ENCODE measurements at regions of chr1 and their contacts with region 1.

Region 1: DNA sequence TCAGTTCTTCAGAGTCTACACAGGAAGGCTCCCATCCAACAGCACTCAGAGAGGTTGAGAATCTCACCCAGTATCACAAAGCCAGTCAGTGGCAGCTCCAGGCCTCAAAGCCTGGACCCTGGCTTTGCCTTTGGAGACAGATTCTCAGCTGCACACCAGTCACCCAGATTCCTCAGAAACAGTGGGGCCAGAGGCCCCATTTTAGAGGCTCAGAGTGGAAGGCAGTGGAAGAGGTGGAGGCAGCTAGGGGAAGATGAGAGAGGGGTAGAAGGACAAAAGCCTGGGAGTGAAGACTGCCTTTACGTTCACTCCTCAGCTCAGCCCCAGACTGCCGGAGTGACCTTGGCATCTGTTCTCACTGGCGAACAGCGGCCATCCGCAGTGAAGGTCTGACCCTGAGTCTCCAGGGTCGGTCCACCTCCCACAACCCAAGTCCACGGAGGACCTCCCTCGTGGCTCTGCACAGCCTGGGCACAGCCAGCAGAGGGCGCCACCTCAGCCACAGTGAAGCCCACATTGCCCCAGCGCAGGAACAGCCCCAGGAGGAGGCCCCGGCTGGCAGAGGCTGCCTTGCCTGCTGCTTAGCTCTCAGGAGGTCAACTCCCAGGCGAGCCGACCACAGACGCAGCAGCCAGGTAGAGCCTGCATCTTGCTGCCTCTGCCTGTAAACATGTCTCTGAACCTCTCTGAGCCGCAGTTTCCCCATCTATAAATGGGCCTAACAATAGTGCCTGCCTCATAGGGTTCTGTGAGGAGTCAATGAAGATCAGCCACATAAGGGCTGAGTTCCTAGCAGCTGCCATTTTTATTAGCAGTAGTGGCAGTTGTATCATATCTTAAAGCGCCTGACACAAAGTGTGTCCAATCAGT is 5.9 kb upstream of the FNDC5 start:
- DNase-seq: no peak
- H3K4me3 ChIP-seq: no peak overlapping the region
- H3K27ac ChIP-seq: no peak overlapping the region
- H3K4me1 ChIP-seq: peaks cover 22 to 42% (median 33%) of the 10 kb centered on the region in 4 donors
- H3K27me3 ChIP-seq: no peaks in the 10 kb centered on the region
- CTCF ChIP-seq: peak; percentile 69 to 91 (median 69)
- EP300 ChIP-seq: no peak
- POLR2A ChIP-seq: no peak

Region 2: GRCh38 chr1:32521165-32521564 is 355.4 kb before region 1 on chr1:
- intact Hi-C with region 1: loop called (anchors 10 kb)
- DNase-seq: no peak
- H3K4me3 ChIP-seq: no peak overlapping the region
- H3K27ac ChIP-seq: no peak overlapping the region
- H3K4me1 ChIP-seq: peaks cover 0 to 13% (median 9%) of the 10 kb centered on the region in 4 donors
- H3K27me3 ChIP-seq: no peaks in the 10 kb centered on the region
- CTCF ChIP-seq: no peak
- EP300 ChIP-seq: no peak
- POLR2A ChIP-seq: no peak

Region 3: DNA sequence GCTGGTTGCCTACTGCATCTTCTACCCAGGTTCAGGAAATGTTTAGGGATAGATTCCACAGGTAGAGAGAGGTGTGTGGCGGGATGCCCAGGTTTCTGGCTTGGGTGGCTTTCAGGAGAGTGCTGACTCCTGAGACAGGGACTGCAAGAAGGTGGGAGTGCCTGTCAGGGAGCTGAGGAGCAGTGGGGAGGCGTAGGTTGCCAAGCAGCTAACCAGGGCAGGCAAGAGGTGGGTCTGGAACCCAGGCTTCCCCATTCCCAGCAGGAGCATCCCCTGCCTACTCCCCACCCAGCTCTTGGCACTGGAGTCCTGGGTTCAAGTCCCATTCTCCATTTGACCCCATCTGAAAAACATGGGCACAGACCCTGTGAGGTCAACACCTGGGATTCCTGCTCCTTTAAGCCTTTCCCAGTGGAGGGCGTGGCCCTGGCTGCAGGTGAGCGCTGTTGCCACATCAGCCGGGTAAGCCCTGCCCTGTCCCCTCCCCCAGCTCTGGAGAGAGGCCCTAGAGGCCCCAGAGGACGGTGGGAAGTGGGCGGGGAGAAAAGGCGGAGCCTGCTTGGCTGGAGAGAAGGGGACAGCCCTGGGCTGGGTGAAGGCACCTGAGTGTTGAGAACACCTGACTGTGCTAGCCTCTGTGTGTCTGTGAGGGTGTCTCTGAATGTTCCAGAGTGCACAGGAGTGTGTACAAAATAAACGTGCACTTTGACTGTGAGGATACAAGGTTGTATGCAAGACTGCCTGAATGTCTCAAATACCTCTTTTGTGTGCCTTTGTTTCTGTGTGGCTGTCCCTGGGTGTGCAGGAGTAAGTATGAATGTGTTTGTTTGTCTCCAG is 160.0 kb before region 1 on chr1:
- intact Hi-C with region 1: loop called (anchors 10 kb)
- DNase-seq: no peak
- H3K4me3 ChIP-seq: no peak overlapping the region
- H3K27ac ChIP-seq: no peak overlapping the region
- H3K4me1 ChIP-seq: peaks cover 4 to 18% (median 9%) of the 10 kb centered on the region in 4 donors
- H3K27me3 ChIP-seq: no peaks in the 10 kb centered on the region
- CTCF ChIP-seq: no peak
- EP300 ChIP-seq: no peak
- POLR2A ChIP-seq: no peak

Region 4: GRCh38 chr1:32924881-32925344 is 48.3 kb after region 1 on chr1:
- intact Hi-C with region 1: no loop called
- DNase-seq: no peak
- H3K4me3 ChIP-seq: peak overlapping the region; percentile 15 to 42 (median 24)
- H3K27ac ChIP-seq: no peak overlapping the region
- H3K4me1 ChIP-seq: peaks cover 12 to 21% (median 17%) of the 10 kb centered on the region in 4 donors
- H3K27me3 ChIP-seq: peaks cover 0 to 27% (median 0%) of the 10 kb centered on the region in 4 donors
- CTCF ChIP-seq: no peak
- EP300 ChIP-seq: no peak
- POLR2A ChIP-seq: no peak

Region 5: DNA sequence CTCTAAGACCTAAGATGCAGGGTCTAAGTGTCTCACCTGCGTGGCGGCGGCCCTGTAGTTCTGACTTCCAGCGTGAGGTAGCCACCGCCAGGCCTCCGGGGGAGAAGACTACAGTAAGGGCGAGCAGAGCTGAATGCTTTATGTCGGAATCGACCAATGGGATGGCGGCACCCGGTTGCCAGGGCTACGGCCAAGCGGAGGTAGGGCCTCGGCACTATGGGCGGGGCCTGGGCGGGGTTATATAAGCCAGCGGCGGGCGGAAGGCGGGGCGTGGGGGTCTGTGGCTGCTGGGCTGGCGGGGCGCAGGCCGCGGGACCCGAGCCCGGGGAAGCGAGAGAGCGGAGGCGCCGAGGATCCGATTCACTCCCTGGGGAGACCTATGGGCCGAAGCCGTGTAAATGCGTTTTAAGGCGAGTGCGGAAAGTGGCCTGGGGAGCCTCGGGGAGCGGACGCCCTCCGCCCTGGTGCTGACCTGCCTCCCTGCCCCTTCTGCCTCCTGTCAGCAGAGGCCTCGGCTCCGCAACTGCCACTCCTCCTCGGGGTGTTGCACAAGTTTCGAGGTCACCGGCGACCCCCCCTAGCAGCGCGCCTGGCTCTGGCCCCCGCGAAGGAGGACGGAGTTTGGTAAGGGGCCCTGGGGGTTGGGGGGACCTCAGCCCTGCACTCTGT is 204.4 kb after region 1 on chr1 and contains the start of gene AZIN2:
- intact Hi-C with region 1: loop called (anchors 10 kb)
- DNase-seq: peak; percentile 99
- H3K4me3 ChIP-seq: peak within 1 kb of the TSS; percentile 70 to 86 (median 76)
- H3K27ac ChIP-seq: peak within 1 kb of the TSS; percentile 23 to 57 (median 48)
- H3K4me1 ChIP-seq: peaks cover 14 to 24% (median 22%) of the 10 kb centered on the region in 4 donors
- H3K27me3 ChIP-seq: no peaks in the 10 kb centered on the region
- CTCF ChIP-seq: no peak
- EP300 ChIP-seq: no peak
- POLR2A ChIP-seq: peak; percentile 26
- total RNA-seq, gene AZIN2: 2.5 to 6.1 (median 4.1) TPM